Activated T-helper 2 cell treated with anti-CD3 and anti-CD28 coated beads, Interferon-gamma antibody, Interleukin-2, Interleukin-4, amounts not matched to agents 10 μg/mL and 5 μg/mL and 100 μg/mL, durations not matched to agents 14 hours and 24 hours and 36 hours (primary cell): ENCODE measurements at regions of chrX and their contacts with region 1.

Region 1: GRCh38 chrX:2500267-2501075 is at the starts of genes DHRSX and ZBED1:
- DNase-seq: peak; percentile 44
- H3K4me3 Mint-ChIP-seq: peak within 1 kb of the TSS; percentile 70
- H3K27ac Mint-ChIP-seq: peak within 1 kb of the TSS; percentile 80
- H3K4me1 Mint-ChIP-seq: peaks cover 24% of the 10 kb centered on the region
- H3K27me3 Mint-ChIP-seq: no peaks in the 10 kb centered on the region
- total RNA-seq, gene DHRSX: 26.1 and 26.4 TPM in 2 replicates
- total RNA-seq, gene ZBED1: 37.3 and 43.1 TPM in 2 replicates

Region 2: GRCh38 chrX:2608638-2609430 is 108.4 kb after region 1 on chrX:
- intact Hi-C with region 1: loop called (anchors 10 kb)
- DNase-seq: peak; percentile 87
- H3K4me3 Mint-ChIP-seq: peak overlapping the region; percentile 95
- H3K27ac Mint-ChIP-seq: peak overlapping the region; percentile 89
- H3K4me1 Mint-ChIP-seq: peaks cover 37% of the 10 kb centered on the region
- H3K27me3 Mint-ChIP-seq: no peaks in the 10 kb centered on the region

Region 3: DNA sequence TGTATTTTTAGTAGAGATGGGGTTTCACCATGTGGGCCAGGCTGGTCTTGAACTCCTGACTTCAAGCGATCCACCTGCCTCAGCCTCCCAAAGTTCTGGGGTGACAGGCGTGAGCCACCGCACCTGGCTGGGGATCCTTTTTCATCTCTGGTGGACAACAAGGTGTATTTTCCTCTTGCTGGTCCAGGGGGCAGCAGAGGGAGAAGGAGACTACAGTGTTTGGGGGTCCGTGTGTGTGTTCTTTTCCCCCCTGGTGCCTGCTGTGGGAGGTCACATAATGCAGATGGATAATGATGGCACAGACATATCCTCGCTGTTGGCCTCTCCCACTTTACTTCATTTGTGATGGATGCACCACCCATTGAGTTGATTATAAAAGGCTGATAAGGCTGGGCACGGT is 151.6 kb after region 1 on chrX:
- intact Hi-C with region 1: no loop called
- DNase-seq: no peak
- H3K4me3 Mint-ChIP-seq: no peak overlapping the region
- H3K27ac Mint-ChIP-seq: no peak overlapping the region
- H3K4me1 Mint-ChIP-seq: peaks cover 10% of the 10 kb centered on the region
- H3K27me3 Mint-ChIP-seq: no peaks in the 10 kb centered on the region